Activated CD4-positive, alpha-beta T cell treated with anti-CD3 and anti-CD28 coated beads for 36 hours (primary cell): ENCODE measurements at regions of chr9 and their contacts with region 1.

Region 1: GRCh38 chr9:38718148-38718547 is 1.8 kb downstream of the FAM240B start:
- DNase-seq: no peak
- ATAC-seq: no peak
- H3K4me3 Mint-ChIP-seq: no peak overlapping the region
- H3K27ac Mint-ChIP-seq: no peak overlapping the region
- H3K4me1 Mint-ChIP-seq: no peaks in the 10 kb centered on the region
- H3K27me3 Mint-ChIP-seq: peaks cover 15% of the 10 kb centered on the region

Region 2: DNA sequence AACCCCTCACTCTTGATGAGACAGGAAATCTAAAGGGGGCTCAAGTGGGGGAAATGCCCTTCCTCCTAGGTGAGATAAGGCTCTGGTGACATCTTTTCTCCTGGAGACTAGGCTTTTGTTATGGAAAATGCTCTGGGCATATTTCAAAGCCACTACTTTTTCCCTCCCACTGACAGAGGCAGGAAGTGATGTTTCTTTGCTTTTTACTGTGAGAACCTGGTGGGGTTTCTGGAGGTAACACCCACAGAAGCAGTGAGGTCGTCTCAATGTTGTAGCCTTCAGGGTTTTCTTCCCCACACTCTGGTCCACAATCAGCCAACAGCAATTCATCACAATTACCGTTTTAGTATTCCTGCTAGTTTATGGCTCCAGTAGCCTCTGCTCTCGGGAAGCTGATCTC is 43.2 kb after region 1 on chr9:
- CTCF ChIA-PET with region 1: no interaction called
- POLR2A ChIA-PET with region 1: no interaction called
- intact Hi-C with region 1: loop called in 1 of 2 experiments (anchors 2 kb)
- DNase-seq: no peak
- ATAC-seq: no peak
- H3K4me3 Mint-ChIP-seq: no peak overlapping the region
- H3K27ac Mint-ChIP-seq: no peak overlapping the region
- H3K4me1 Mint-ChIP-seq: no peaks in the 10 kb centered on the region
- H3K27me3 Mint-ChIP-seq: peaks cover 13% of the 10 kb centered on the region